CD8-positive, alpha-beta T cell (primary cell): ENCODE measurements at regions of chr3 and their contacts with region 1.

Region 1: GRCh38 chr3:109081746-109082510 is 36.0 kb downstream of the MORC1 start:
- DNase-seq: peak in 2 of 9 experiments; percentile 40 to 52
- ATAC-seq: no peak
- H3K4me3 ChIP-seq: no peak overlapping the region
- H3K4me3 Mint-ChIP-seq: no peak overlapping the region
- H3K27ac ChIP-seq: no peak overlapping the region
- H3K27ac Mint-ChIP-seq: no peak overlapping the region
- H3K4me1 ChIP-seq: no peaks in the 10 kb centered on the region
- H3K4me1 Mint-ChIP-seq: no peaks in the 10 kb centered on the region
- H3K27me3 ChIP-seq: no peaks in the 10 kb centered on the region
- H3K27me3 Mint-ChIP-seq: peaks cover 15% of the 10 kb centered on the region
- CTCF ChIP-seq: peak; percentile 39

Region 2: DNA sequence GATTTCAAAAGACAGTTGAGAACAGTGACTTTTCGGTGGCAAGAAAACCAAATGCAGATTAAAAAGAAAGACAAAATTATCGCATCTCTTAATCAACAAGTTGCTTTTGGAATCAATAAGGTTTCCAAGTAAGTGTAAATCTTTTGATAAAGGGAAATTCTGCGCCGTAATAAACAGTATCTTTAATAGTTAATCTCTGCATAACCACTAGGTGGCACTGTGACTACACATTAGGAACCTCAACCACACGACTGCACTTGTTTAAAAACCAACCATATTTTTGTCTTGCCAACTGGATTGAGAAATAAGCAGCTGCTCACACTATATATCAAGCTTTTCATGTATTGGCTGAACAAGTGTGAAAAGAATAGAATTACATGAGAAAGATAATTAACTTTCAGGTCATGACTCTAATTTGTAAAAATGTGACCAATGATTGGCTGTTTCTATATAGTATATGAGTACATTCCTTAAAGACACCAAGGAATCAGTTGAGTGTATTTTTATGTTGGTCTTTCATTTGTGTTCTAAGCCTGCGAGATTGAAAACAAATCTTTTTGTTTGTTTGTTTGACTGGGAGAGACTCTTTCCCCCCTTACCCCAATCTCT is 419.7 kb before region 1 on chr3:
- CTCF ChIA-PET with region 1: no interaction called
- POLR2A ChIA-PET with region 1: no interaction called
- intact Hi-C with region 1: loop called in 1 of 2 experiments (anchors 5 kb)
- DNase-seq: peak in 7 of 9 experiments; percentile 12 to 85 (median 33)
- ATAC-seq: peak; percentile 84
- H3K4me3 ChIP-seq: no peak overlapping the region
- H3K4me3 Mint-ChIP-seq: no peak overlapping the region
- H3K27ac ChIP-seq: no peak overlapping the region
- H3K27ac Mint-ChIP-seq: no peak overlapping the region
- H3K4me1 ChIP-seq: no peaks in the 10 kb centered on the region
- H3K4me1 Mint-ChIP-seq: peaks cover 10% of the 10 kb centered on the region
- H3K27me3 ChIP-seq: no peaks in the 10 kb centered on the region
- H3K27me3 Mint-ChIP-seq: no peaks in the 10 kb centered on the region
- CTCF ChIP-seq: peak; percentile 83

Region 3: GRCh38 chr3:109784852-109785631 is 703.1 kb after region 1 on chr3:
- CTCF ChIA-PET with region 1: no interaction called
- POLR2A ChIA-PET with region 1: no interaction called
- intact Hi-C with region 1: no loop called
- DNase-seq: no peak
- ATAC-seq: no peak
- H3K4me3 ChIP-seq: no peak overlapping the region
- H3K4me3 Mint-ChIP-seq: no peak overlapping the region
- H3K27ac ChIP-seq: no peak overlapping the region
- H3K27ac Mint-ChIP-seq: no peak overlapping the region
- H3K4me1 ChIP-seq: no peaks in the 10 kb centered on the region
- H3K4me1 Mint-ChIP-seq: peaks cover 6% of the 10 kb centered on the region
- H3K27me3 ChIP-seq: no peaks in the 10 kb centered on the region
- H3K27me3 Mint-ChIP-seq: no peaks in the 10 kb centered on the region
- CTCF ChIP-seq: no peak

Region 4: DNA sequence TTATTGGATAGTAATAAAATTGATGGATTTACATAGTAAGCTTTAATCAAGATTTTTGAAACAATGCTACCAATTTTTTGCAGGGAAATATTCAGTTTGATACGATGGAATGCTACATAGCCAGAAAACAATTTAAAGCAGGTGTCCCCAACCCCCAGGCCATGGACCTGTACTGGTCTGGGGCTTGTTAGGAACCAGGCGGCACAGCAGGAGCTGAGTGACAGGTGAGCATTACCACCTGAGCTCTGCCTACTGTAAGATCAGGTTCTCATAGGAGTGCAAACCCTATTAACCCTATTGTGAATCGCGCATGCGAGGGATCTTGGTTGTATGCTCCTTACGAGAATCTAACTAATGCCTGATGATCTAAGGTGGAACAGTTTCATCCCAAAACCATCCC is 1667.1 kb after region 1 on chr3:
- CTCF ChIA-PET with region 1: no interaction called
- POLR2A ChIA-PET with region 1: no interaction called
- intact Hi-C with region 1: loop called in 1 of 2 experiments (anchors 5 kb)
- DNase-seq: no peak
- ATAC-seq: no peak
- H3K4me3 ChIP-seq: no peak overlapping the region
- H3K4me3 Mint-ChIP-seq: no peak overlapping the region
- H3K27ac ChIP-seq: no peak overlapping the region
- H3K27ac Mint-ChIP-seq: no peak overlapping the region
- H3K4me1 ChIP-seq: no peaks in the 10 kb centered on the region
- H3K4me1 Mint-ChIP-seq: no peaks in the 10 kb centered on the region
- H3K27me3 ChIP-seq: no peaks in the 10 kb centered on the region
- H3K27me3 Mint-ChIP-seq: peaks cover 2% of the 10 kb centered on the region
- CTCF ChIP-seq: no peak